MCF 10A (cell line): ENCODE measurements at regions of chr15 and their contacts with region 1.

Region 1: DNA sequence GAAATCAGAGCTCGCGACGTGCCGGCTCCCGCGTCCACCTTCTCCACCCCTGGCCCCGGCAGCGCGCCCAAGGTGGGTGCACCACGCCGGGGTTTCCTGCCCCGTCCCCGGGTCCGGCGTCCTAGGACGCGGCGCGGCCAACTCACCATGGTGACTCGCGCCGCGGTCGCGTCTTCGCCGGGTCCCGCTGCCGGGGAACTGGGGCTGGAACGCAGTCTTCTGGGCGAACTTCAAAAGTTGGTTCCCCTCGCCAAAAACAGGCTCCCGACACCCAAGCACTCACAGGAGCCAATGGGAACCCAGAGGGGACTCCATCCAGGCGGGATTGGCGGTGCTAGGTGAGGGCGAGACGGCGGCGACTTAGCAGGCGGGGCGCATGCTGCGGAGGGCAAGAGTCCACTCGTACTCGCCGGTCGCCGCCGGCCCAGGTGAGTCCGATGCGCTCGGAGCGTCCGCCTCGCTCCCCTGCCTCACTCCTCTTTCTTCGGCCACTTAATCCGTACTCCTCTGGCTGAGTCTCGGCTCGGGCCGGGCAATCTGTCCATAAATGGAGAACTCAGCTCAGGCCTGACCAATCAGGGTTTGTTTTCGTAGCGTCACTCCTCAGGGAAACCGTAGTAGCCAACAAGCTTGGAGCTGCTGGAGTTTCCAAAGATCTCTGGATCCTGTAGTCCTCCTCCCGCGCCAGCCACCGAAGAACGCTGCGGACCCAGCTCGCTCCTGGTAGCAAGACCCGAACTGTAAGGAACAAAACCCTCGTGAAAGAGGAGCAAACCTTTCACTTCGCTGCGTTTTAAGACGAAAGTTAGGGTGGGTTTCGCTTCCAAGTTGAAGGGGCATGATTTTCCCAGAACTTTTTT is at the start of gene MYO1E:
- DNase-seq: peak; percentile 98
- H3K4me3 Mint-ChIP-seq: peak within 1 kb of the TSS; percentile 99
- H3K27ac Mint-ChIP-seq: peak within 1 kb of the TSS; percentile 98
- H3K4me1 Mint-ChIP-seq: peaks cover 30% of the 10 kb centered on the region
- H3K27me3 Mint-ChIP-seq: no peaks in the 10 kb centered on the region
- CTCF ChIP-seq: no peak
- total RNA-seq, gene MYO1E: 116 and 121 TPM in 2 replicates

Region 2: DNA sequence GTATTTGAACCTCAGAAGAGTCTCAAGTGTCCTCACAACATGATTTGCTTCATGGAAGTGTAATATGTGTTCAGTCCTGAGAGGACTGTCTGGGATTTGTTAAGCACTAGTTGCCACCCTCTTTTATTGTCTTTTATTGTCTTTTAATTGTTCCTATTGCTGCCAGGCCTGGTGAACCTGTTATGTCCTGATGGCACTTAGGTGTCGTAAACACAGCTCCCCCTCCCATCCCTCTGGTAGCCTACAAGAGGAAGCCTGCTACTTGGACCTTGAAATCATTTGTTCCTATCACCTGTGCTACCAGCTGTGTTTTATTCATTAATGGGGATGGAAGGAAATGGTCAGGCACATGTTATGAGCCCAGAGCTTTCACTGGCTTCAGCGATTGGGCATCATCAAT is 248.3 kb before region 1 on chr15:
- CTCF ChIA-PET with region 1: no interaction called
- POLR2A ChIA-PET with region 1: no interaction called
- intact Hi-C with region 1: no loop called
- DNase-seq: no peak
- H3K4me3 Mint-ChIP-seq: no peak overlapping the region
- H3K27ac Mint-ChIP-seq: peak overlapping the region; percentile 5
- H3K4me1 Mint-ChIP-seq: no peaks in the 10 kb centered on the region
- H3K27me3 Mint-ChIP-seq: no peaks in the 10 kb centered on the region
- CTCF ChIP-seq: no peak

Region 3: DNA sequence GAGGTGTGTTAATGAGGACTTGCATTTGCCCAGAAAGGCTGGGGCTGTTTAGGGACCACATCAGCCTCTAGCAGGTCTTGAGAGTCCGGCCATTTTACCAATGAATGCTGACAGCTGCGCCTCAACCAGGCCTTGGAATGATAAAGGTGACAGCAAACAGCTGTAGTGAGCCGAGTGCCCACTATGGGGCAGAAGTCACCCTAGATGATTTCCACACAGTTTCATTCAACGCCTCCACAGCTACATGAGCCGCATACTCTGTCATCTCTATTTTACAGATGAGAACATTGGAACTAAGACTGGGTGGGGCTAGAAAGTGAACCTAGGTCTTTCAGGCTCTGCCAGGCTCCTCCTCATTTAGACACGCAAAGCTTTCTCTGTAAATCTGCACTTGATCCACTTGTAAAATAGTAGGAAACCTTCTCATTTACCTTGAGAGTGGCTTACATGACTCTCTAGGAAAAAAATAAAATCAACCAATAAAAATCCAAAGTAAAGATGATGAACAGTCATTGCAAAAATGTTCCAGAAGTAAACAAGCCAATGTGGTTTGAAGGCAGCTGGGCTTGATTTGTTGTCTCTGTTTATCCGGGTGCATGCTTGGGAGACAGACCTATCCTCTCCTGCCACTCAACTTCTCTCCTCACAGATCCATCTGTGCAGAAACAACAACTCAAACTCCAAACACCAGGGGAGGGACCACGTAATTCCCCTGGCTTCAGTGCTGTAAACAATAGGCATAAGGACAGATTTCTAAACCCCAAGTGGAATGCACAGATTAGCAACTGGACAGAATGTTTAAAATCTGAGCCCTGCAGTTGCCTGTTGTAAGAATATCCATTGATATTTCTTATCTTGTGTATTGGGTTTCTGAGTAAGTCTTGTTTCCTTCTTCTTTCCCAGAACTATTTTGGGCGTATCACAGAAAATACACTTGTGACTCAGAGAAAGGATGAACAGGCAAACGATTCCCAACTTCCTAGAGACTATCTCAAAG is 197.4 kb before region 1 on chr15:
- CTCF ChIA-PET with region 1: interaction called, 6 read pairs
- POLR2A ChIA-PET with region 1: interaction called, 76 read pairs
- intact Hi-C with region 1: loop called (anchors 1 kb)
- DNase-seq: peak; percentile 84
- H3K4me3 Mint-ChIP-seq: peak overlapping the region; percentile 29
- H3K27ac Mint-ChIP-seq: peak overlapping the region; percentile 93
- H3K4me1 Mint-ChIP-seq: peaks cover 22% of the 10 kb centered on the region
- H3K27me3 Mint-ChIP-seq: no peaks in the 10 kb centered on the region
- CTCF ChIP-seq: peak; percentile 69

Region 4: DNA sequence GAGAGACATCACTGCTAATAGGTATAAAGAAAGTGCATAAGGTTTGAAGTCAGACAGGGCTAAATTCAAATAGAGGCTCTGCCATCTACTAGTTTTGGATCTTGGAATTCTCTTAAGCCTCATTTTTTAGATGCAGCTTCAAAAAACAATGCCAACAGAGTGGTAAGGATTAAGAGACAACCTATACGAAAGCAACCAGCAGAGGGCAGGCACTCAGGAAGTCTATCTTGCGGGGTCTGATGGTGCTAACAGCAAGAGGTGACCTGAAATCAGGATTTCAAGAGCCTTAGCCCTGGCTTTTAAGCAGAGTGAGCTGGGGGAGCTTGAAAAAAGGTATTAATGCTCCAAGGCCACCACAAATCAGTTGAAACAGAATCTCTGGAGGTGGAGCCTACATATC is 125.2 kb before region 1 on chr15:
- CTCF ChIA-PET with region 1: interaction called, 6 read pairs
- POLR2A ChIA-PET with region 1: interaction called, 17 read pairs
- intact Hi-C with region 1: loop called (anchors 1 kb)
- DNase-seq: peak; percentile 77
- H3K4me3 Mint-ChIP-seq: no peak overlapping the region
- H3K27ac Mint-ChIP-seq: no peak overlapping the region
- H3K4me1 Mint-ChIP-seq: peaks cover 5% of the 10 kb centered on the region
- H3K27me3 Mint-ChIP-seq: no peaks in the 10 kb centered on the region
- CTCF ChIP-seq: peak; percentile 57

Region 5: DNA sequence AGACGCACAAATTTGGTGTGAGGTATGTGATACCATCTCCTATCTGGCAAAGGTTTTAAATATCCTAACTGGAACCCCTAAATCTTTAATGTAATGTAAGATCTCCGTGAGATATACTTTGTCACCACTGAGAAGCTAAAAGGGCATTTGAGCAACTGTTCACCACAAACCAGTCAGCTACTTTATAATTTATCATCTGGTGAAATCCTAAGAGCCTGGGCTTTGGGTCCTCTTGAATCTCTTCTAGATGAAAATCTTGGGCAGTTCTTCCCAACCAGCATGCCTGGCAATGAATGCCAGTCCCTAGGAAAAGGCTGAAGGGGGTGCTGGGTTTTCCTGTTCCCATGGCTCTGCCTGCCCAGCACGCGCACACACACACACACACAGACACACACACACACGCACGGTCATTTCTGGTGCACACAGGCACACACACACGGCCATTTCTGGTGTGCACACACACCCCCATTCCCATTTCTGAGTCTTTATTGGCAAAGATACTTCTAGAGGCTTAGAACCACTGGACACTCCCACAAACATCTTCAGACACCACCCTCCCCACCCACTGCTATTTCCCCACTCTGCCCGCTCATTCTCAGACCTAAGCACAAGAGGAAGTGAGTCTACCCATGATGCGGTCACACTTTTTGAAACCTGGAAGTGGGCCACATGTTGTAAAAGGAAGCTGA is 72.5 kb before region 1 on chr15:
- CTCF ChIA-PET with region 1: interaction called, 9 read pairs
- POLR2A ChIA-PET with region 1: interaction called, 28 read pairs
- intact Hi-C with region 1: loop called (anchors 1 kb)
- DNase-seq: peak; percentile 99
- H3K4me3 Mint-ChIP-seq: peak overlapping the region; percentile 51
- H3K27ac Mint-ChIP-seq: peak overlapping the region; percentile 69
- H3K4me1 Mint-ChIP-seq: peaks cover 40% of the 10 kb centered on the region
- H3K27me3 Mint-ChIP-seq: no peaks in the 10 kb centered on the region
- CTCF ChIP-seq: no peak

Region 6: DNA sequence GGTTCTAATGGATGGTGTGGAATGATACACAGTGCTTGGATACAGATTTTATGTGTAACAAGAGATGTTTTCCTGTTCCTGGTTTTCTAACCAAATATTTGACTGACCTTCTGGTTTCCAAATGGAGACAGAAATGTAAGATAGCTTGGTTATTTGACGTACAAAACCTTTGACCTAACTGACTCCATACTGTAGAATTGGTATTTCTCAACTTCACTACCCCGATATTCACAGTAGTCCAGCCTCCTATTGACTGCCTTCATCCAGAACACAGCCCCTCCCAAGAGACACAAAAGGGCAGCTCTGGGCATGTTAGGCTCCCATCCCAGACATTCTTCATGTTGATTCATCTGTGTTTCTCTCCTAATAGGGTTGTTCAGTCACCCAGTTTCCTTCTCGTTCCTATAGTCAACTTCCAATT is 33.3 kb before region 1 on chr15:
- CTCF ChIA-PET with region 1: interaction called, 5 read pairs
- POLR2A ChIA-PET with region 1: interaction called, 10 read pairs
- intact Hi-C with region 1: no loop called
- DNase-seq: peak; percentile 89
- H3K4me3 Mint-ChIP-seq: peak overlapping the region; percentile 52
- H3K27ac Mint-ChIP-seq: peak overlapping the region; percentile 92
- H3K4me1 Mint-ChIP-seq: peaks cover 25% of the 10 kb centered on the region
- H3K27me3 Mint-ChIP-seq: no peaks in the 10 kb centered on the region
- CTCF ChIP-seq: no peak

Region 7: DNA sequence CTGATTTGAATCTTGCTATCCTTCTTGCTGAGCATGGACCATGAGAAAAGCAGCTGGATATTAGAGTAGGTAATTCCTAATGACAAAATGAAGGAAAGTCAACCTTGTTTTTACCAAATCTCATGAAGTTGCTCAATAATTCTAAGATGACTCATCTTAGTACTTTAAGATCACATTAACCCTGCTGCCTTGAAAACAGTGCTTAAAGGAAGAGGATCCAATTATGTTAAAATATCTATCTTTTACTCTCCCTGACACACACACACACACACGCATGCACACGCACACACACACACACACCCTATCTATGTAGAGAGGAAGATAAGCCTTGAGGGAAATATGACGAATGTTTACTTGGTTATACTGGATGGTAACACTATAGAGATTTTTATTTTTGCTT is 16.1 kb after region 1 on chr15:
- CTCF ChIA-PET with region 1: interaction called, 3 read pairs
- POLR2A ChIA-PET with region 1: interaction called, 13 read pairs
- intact Hi-C with region 1: no loop called
- DNase-seq: peak; percentile 55
- H3K4me3 Mint-ChIP-seq: no peak overlapping the region
- H3K27ac Mint-ChIP-seq: peak overlapping the region; percentile 79
- H3K4me1 Mint-ChIP-seq: peaks cover 11% of the 10 kb centered on the region
- H3K27me3 Mint-ChIP-seq: no peaks in the 10 kb centered on the region
- CTCF ChIP-seq: no peak